HCT116 (cell line): ENCODE measurements at regions of chr5 and their contacts with region 1.

Region 1: GRCh38 chr5:143824851-143825720 is 13.1 kb downstream of the HMHB1 start:
- DNase-seq: peak; percentile 65
- ATAC-seq: peak; percentile 99
- H3K4me3 ChIP-seq: no peak overlapping the region
- H3K27ac ChIP-seq: no peak overlapping the region
- H3K4me1 ChIP-seq: no peaks in the 10 kb centered on the region
- H3K27me3 ChIP-seq: no peaks in the 10 kb centered on the region
- CTCF ChIP-seq: peak; percentile 79 to 95 (median 90)
- POLR2A ChIP-seq: no peak
- RAD21 ChIP-seq: peak; percentile 98

Region 2: GRCh38 chr5:142922223-142922952 is 902.7 kb before region 1 on chr5:
- CTCF ChIA-PET with region 1: no interaction called
- POLR2A ChIA-PET with region 1: no interaction called
- RAD21 ChIA-PET with region 1: no interaction called
- intact Hi-C with region 1: loop called (anchors 1 kb)
- DNase-seq: no peak
- ATAC-seq: peak; percentile 75
- H3K4me3 ChIP-seq: no peak overlapping the region
- H3K27ac ChIP-seq: no peak overlapping the region
- H3K4me1 ChIP-seq: no peaks in the 10 kb centered on the region
- H3K27me3 ChIP-seq: no peaks in the 10 kb centered on the region
- CTCF ChIP-seq: peak; percentile 35 to 56 (median 51); a peak in 5 of 6 replicates
- POLR2A ChIP-seq: no peak
- RAD21 ChIP-seq: peak; percentile 69

Region 3: DNA sequence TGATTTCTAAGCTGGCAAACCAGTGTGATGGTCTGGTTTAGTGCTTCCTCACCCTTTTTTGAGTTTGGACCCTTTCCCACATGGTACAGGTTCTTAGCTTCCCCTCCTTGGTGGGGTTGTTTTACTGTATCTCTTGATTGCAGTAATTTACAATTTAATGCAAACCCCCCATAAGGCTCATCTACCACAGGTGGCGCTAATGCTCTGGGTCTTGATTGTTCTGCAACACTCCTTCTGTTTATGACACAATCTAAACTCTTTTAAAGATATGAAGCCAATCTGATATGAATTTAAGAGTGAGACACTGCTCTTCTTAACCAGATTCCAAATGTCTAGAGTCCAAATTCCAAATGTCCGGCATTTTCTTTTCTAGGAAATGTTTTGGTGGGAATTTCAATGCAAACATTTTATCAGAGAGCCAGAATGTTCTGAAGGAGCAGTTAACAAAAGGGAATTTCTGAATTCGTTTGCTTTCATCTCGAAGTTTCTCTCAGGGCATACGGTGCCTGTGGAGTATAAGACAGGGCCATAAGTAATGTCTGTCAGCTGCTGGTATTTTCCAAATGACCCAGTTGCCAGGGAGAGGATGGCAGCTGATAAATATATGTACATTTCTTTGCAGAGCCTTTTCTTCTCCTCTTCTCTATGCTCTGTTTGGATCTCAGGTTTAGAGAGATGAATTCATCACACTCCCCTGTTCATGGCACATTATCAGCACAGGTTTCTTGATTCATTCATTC is 808.1 kb before region 1 on chr5:
- CTCF ChIA-PET with region 1: no interaction called
- POLR2A ChIA-PET with region 1: no interaction called
- RAD21 ChIA-PET with region 1: no interaction called
- intact Hi-C with region 1: loop called (anchors 1 kb)
- DNase-seq: no peak
- ATAC-seq: peak; percentile 73
- H3K4me3 ChIP-seq: no peak overlapping the region
- H3K27ac ChIP-seq: no peak overlapping the region
- H3K4me1 ChIP-seq: no peaks in the 10 kb centered on the region
- H3K27me3 ChIP-seq: no peaks in the 10 kb centered on the region
- CTCF ChIP-seq: peak; percentile 51 to 80 (median 66); a peak in 5 of 6 replicates
- POLR2A ChIP-seq: no peak
- RAD21 ChIP-seq: peak; percentile 86

Region 4: DNA sequence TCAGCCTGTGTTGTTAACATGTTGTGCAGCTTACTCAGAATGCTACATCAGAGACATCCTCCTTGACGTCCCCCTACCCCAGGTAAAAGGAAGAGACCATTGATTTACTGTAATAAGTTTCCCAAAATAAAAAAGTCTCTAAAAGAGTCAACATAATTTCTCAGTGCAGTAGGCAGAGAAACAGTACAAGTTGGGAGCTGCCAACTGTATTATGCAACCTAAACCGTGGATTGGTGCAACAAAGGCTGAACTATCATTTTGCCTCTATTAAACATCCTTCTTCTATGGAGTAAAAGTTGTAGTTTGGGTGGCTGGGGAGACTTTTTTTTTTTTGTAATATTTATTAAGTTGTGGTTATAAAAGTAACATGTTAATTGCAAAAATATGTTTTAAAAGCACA is 629.6 kb before region 1 on chr5:
- CTCF ChIA-PET with region 1: no interaction called
- POLR2A ChIA-PET with region 1: no interaction called
- RAD21 ChIA-PET with region 1: no interaction called
- intact Hi-C with region 1: loop called (anchors 2 kb)
- DNase-seq: no peak
- ATAC-seq: no peak
- H3K4me3 ChIP-seq: no peak overlapping the region
- H3K27ac ChIP-seq: no peak overlapping the region
- H3K4me1 ChIP-seq: peaks cover 0 to 2% of the 10 kb centered on the region in 2 experiments; a peak in 1 of 4 replicates
- H3K27me3 ChIP-seq: no peaks in the 10 kb centered on the region
- CTCF ChIP-seq: no peak
- POLR2A ChIP-seq: no peak
- RAD21 ChIP-seq: no peak

Region 5: GRCh38 chr5:143648696-143649095 is 176.4 kb before region 1 on chr5:
- CTCF ChIA-PET with region 1: no interaction called
- POLR2A ChIA-PET with region 1: no interaction called
- RAD21 ChIA-PET with region 1: no interaction called
- intact Hi-C with region 1: loop called (anchors 5 kb)
- DNase-seq: no peak
- ATAC-seq: 0 out of 2 replicates have a peak, but pooled peaks have one; percentile 54
- H3K4me3 ChIP-seq: no peak overlapping the region
- H3K27ac ChIP-seq: no peak overlapping the region
- H3K4me1 ChIP-seq: peaks cover 0 to 6% of the 10 kb centered on the region in 2 experiments; a peak in 1 of 4 replicates
- H3K27me3 ChIP-seq: no peaks in the 10 kb centered on the region
- CTCF ChIP-seq: peak in 2 of 3 experiments; percentile 28 to 36; a peak in 3 of 6 replicates
- POLR2A ChIP-seq: no peak
- RAD21 ChIP-seq: no peak; the same call in 1 of the 2 replicates